PC-9 (cell line): ENCODE measurements at regions of chr1 and their contacts with region 1.

Region 1: DNA sequence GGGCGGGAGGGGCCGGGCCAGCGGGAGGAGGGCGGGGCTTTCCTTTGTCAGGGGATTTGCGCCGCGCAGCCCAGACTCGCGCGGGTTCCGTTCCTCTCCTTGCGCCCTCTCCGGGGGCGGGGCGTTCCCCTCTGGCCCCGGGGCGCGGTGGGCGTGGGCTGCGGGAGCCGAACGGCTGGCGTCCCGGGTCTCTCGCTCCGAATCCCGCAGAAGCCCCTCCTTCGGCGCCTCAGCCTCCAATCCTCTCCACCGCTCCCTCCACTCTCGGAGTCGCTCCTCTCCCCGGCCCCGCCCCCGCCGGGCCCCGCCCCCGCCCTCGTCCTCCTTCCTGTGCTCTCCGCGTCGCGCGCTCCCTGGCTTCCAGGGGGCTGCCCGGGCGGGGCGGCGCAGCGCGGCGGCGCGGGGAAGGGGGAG is 82.8 kb upstream of the BMP8A start:
- DNase-seq: peak; percentile 83 to 98
- H3K4me3 ChIP-seq: peak overlapping the region; percentile 97
- H3K27ac ChIP-seq: no peak overlapping the region
- H3K4me1 ChIP-seq: peaks cover 56% of the 10 kb centered on the region
- H3K27me3 ChIP-seq: no peaks in the 10 kb centered on the region
- CTCF ChIP-seq: no peak

Region 2: GRCh38 chr1:39091845-39092645 is 316.6 kb before region 1 on chr1:
- CTCF ChIA-PET with region 1: interaction called, 13 read pairs
- POLR2A ChIA-PET with region 1: no interaction called
- intact Hi-C with region 1: no loop called
- DNase-seq: peak; percentile 70 to 71
- H3K4me3 ChIP-seq: no peak overlapping the region
- H3K27ac ChIP-seq: no peak overlapping the region
- H3K4me1 ChIP-seq: peaks cover 12% of the 10 kb centered on the region
- H3K27me3 ChIP-seq: no peaks in the 10 kb centered on the region
- CTCF ChIP-seq: peak; percentile 84

Region 3: GRCh38 chr1:39196244-39197215 is 212.1 kb before region 1 on chr1:
- CTCF ChIA-PET with region 1: interaction called, 10 read pairs
- POLR2A ChIA-PET with region 1: no interaction called
- intact Hi-C with region 1: no loop called
- DNase-seq: no peak
- H3K4me3 ChIP-seq: no peak overlapping the region
- H3K27ac ChIP-seq: 0 out of 2 replicates have a peak overlapping the region, but pooled peaks have one; percentile 29
- H3K4me1 ChIP-seq: peaks cover 47% of the 10 kb centered on the region
- H3K27me3 ChIP-seq: no peaks in the 10 kb centered on the region
- CTCF ChIP-seq: no peak

Region 4: GRCh38 chr1:39354572-39354971 is 54.1 kb before region 1 on chr1:
- CTCF ChIA-PET with region 1: no interaction called
- POLR2A ChIA-PET with region 1: no interaction called
- intact Hi-C with region 1: loop called (anchors 10 kb)
- DNase-seq: no peak
- H3K4me3 ChIP-seq: no peak overlapping the region
- H3K27ac ChIP-seq: no peak overlapping the region
- H3K4me1 ChIP-seq: no peaks in the 10 kb centered on the region
- H3K27me3 ChIP-seq: no peaks in the 10 kb centered on the region
- CTCF ChIP-seq: no peak

Region 5: GRCh38 chr1:39391691-39392679 is 16.7 kb before region 1 on chr1:
- CTCF ChIA-PET with region 1: interaction called, 22 read pairs
- POLR2A ChIA-PET with region 1: interaction called, 28 read pairs
- intact Hi-C with region 1: loop called (anchors 1 kb)
- DNase-seq: peak; percentile 31 to 72
- H3K4me3 ChIP-seq: peak overlapping the region; percentile 25
- H3K27ac ChIP-seq: peak overlapping the region; percentile 79
- H3K4me1 ChIP-seq: peaks cover 74% of the 10 kb centered on the region
- H3K27me3 ChIP-seq: no peaks in the 10 kb centered on the region
- CTCF ChIP-seq: no peak

Region 6: GRCh38 chr1:39653546-39654031 is 244.9 kb after region 1 on chr1:
- CTCF ChIA-PET with region 1: no interaction called
- POLR2A ChIA-PET with region 1: interaction called, 11 read pairs
- intact Hi-C with region 1: no loop called
- DNase-seq: peak in 1 of 2 experiments; percentile 74
- H3K4me3 ChIP-seq: no peak overlapping the region
- H3K27ac ChIP-seq: no peak overlapping the region
- H3K4me1 ChIP-seq: no peaks in the 10 kb centered on the region
- H3K27me3 ChIP-seq: no peaks in the 10 kb centered on the region
- CTCF ChIP-seq: peak; percentile 92

Region 7: DNA sequence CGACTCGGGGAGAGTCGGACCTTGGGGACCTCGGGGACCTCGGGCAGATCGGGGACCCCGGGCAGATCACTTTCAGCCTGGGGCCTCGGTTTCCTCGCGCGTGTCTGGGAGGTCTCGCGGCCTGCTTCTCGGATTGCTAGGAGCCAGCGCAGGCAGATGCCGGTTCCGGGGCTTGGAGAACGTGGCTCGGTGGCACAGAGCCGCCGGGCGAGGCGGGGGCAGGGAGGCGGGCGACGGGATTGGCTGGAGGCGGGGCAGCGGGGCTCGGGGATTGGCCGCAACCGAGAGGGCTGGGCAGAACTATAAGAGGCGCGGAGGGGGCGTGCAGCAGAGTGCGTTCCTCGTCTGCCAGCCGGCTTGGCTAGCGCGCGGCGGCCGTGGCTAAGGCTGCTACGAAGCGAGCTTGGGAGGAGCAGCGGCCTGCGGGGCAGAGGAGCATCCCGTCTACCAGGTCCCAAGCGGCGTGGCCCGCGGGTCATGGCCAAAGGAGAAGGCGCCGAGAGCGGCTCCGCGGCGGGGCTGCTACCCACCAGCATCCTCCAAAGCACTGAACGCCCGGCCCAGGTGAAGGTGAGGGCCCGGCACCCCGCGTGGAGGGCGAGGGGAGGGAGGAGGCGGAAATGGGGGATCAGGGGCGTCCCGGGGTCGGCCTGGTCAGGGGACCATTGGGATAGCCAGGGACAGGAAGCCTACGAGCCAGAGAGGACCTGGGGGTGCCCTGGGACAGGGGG is 546.3 kb after region 1 on chr1 and contains the start of gene MFSD2A:
- CTCF ChIA-PET with region 1: no interaction called
- POLR2A ChIA-PET with region 1: no interaction called
- intact Hi-C with region 1: no loop called
- DNase-seq: peak; percentile 62 to 93
- H3K4me3 ChIP-seq: peak within 1 kb of the TSS; percentile 69
- H3K27ac ChIP-seq: no peak within 1 kb of the TSS
- H3K4me1 ChIP-seq: peaks cover 12% of the 10 kb centered on the region
- H3K27me3 ChIP-seq: no peaks in the 10 kb centered on the region
- CTCF ChIP-seq: no peak
- total RNA-seq, gene MFSD2A: 1.4 and 1.8 TPM in 2 replicates

Region 8: GRCh38 chr1:39973503-39974135 is 565.0 kb after region 1 on chr1:
- CTCF ChIA-PET with region 1: no interaction called
- POLR2A ChIA-PET with region 1: interaction called, 16 read pairs
- intact Hi-C with region 1: no loop called
- DNase-seq: peak; percentile 42 to 69
- H3K4me3 ChIP-seq: no peak overlapping the region
- H3K27ac ChIP-seq: no peak overlapping the region
- H3K4me1 ChIP-seq: no peaks in the 10 kb centered on the region; the same call in 1 of the 2 replicates
- H3K27me3 ChIP-seq: no peaks in the 10 kb centered on the region
- CTCF ChIP-seq: peak; percentile 98